Colonic mucosa (tissue), 4 donors: ENCODE measurements at regions of chr4 and their contacts with region 1.

Region 1: DNA sequence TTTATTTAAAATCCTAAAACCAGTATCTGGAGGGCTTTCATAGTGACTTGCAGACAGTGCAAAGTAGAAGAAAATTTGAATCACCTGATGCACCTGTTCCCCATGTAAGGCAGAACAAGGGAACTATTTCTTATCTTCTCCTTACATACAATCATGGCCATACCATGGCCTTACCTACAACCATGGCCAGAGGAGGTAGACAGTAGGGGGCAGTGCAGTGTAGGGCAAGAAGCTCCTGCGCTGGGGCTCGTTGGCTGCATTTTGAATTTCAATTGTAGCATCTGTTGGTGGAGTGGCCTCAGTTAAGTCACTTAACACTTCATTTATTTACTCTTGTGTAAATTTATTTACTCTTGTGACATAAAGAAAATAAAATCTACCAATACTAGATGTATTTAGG is 33.0 kb downstream of the GALNTL6 start:
- DNase-seq: peak; percentile 52
- H3K4me3 ChIP-seq: no peak overlapping the region
- H3K27ac ChIP-seq: no peak overlapping the region
- H3K4me1 ChIP-seq: no peaks in the 10 kb centered on the region
- H3K27me3 ChIP-seq: no peaks in the 10 kb centered on the region
- CTCF ChIP-seq: peak; percentile 54

Region 2: DNA sequence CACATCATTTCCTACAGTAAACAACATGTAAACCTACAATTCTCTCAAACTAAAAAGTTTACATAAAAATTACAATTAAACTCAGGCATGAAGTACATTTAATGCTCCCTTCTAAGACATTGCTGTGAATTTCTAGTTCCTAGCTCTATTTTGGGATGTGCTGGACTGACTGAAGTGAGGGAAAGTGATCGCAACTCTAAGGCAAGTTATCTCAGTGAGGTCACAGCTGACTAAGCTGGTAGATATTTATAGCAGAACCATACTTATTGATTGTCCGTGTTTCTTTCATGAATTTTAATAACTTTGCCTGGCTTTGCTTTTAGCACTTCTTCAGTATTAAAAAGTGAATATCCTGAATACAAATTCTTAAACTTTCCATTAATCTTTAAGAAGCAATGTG is 603.4 kb before region 1 on chr4:
- intact Hi-C with region 1: no loop called
- DNase-seq: no peak
- H3K4me3 ChIP-seq: no peak overlapping the region
- H3K27ac ChIP-seq: no peak overlapping the region
- H3K4me1 ChIP-seq: no peaks in the 10 kb centered on the region
- H3K27me3 ChIP-seq: no peaks in the 10 kb centered on the region
- CTCF ChIP-seq: no peak

Region 3: DNA sequence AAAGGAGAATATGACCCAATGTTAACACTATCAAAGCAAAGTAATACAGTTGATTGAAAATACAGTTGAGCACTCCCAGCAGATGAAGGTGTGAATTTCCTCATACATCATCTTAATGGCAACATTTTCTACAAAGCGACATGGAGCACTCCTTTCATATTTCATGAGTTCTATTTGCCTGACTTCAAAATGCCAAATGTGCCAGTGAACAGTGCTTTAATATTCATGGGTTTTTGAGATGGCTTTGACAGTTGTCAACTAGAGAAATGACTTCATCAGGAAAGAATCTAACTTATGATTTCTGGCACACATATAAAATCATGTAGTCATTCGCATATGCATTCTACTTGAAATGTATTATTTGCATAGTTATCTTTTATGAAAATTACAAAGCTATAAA is 189.3 kb after region 1 on chr4:
- intact Hi-C with region 1: loop called (anchors 10 kb)
- DNase-seq: no peak
- H3K4me3 ChIP-seq: no peak overlapping the region
- H3K27ac ChIP-seq: no peak overlapping the region
- H3K4me1 ChIP-seq: no peaks in the 10 kb centered on the region
- H3K27me3 ChIP-seq: no peaks in the 10 kb centered on the region
- CTCF ChIP-seq: no peak

Region 4: DNA sequence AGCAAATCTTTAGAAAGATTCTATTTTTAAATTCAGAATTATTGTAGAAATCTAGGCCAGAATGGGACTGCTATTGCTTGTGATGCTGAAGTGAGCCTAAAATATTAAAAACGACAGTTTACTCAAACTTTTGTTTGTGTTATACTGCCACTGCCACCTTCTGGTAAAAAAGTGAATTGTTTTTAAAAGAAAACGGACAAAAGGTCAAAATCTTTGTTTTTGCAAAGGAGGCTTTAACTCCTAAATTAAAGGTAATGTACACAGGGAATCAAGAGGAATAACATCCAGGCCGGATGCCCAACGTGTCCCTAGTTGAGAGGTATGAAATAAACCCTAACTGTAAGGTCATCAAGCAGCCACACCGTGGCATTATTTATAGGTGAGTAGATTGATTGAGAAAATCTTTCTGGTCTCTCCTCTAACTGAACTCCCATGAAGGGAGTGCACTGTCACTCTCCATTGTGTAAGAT is 984.1 kb after region 1 on chr4:
- intact Hi-C with region 1: loop called (anchors 10 kb)
- DNase-seq: no peak
- H3K4me3 ChIP-seq: no peak overlapping the region
- H3K27ac ChIP-seq: no peak overlapping the region
- H3K4me1 ChIP-seq: no peaks in the 10 kb centered on the region
- H3K27me3 ChIP-seq: no peaks in the 10 kb centered on the region
- CTCF ChIP-seq: peak; percentile 48